Caco-2 (cell line): ENCODE measurements at regions of chr3 and their contacts with region 1.

Region 1: GRCh38 chr3:119352849-119353502 is 58.8 kb downstream of the ARHGAP31 start:
- DNase-seq: peak in 1 of 2 experiments; percentile 43
- H3K4me3 ChIP-seq: no peak overlapping the region
- H3K4me3 Mint-ChIP-seq: peak overlapping the region; percentile 28
- H3K27ac Mint-ChIP-seq: peak overlapping the region; percentile 84
- H3K4me1 ChIP-seq: peaks cover 57% of the 10 kb centered on the region
- H3K4me1 Mint-ChIP-seq: peaks cover 48% of the 10 kb centered on the region
- H3K27me3 ChIP-seq: no peaks in the 10 kb centered on the region
- H3K27me3 Mint-ChIP-seq: no peaks in the 10 kb centered on the region
- CTCF ChIP-seq: peak; percentile 12 to 38

Region 2: DNA sequence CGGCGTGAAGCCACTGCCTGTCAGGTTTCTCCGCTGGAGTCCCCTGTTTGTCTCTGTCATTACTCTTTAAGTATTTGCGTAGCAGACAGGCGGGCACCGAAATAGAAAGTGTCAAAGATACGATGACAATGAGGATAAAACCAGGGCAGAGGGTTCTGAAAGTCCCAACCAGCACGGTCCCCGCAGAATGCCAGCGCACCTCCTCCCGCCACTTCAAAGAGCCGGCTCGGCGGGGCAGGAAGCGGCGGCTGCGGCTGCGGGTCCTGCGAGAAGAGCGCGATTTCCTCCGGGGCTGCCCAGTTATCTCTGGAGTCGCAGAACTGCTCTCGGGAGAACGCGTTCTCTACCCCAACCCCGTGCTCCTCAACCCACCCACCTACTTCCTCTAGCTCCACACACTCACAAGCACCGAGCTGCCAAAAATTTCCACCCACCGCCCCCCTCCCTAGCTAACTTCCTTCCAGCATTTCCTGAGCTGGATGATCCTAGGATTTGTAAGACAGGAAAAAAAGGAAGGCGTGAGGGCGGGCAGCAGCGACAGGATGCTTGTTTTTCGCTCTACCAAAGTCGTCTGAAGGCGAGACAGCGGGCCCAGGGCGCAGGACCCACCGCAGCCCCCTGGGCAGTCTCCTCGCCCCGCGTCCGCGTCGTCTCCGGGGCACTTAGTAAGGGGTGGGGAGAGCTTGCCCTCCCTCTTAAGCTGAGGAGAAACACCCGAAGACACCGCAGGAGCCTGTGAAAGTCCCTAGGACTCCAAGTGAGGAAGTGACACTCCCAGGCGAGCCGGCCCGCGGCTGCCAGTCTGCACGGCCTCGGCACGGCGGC is 58.9 kb before region 1 on chr3 and contains the start of gene ARHGAP31:
- CTCF ChIA-PET with region 1: interaction called, 3 read pairs
- POLR2A ChIA-PET with region 1: no interaction called
- intact Hi-C with region 1: loop called (anchors 1 kb)
- DNase-seq: peak; percentile 53 to 55
- H3K4me3 ChIP-seq: peak within 1 kb of the TSS; percentile 36
- H3K4me3 Mint-ChIP-seq: peak within 1 kb of the TSS; percentile 82
- H3K27ac Mint-ChIP-seq: peak within 1 kb of the TSS; percentile 25
- H3K4me1 ChIP-seq: peaks cover 29% of the 10 kb centered on the region
- H3K4me1 Mint-ChIP-seq: peaks cover 17% of the 10 kb centered on the region
- H3K27me3 ChIP-seq: no peaks in the 10 kb centered on the region
- H3K27me3 Mint-ChIP-seq: no peaks in the 10 kb centered on the region
- CTCF ChIP-seq: no peak
- total RNA-seq, gene ARHGAP31: 0.25 and 0.49 TPM in 2 replicates